Activated T-helper 1 cell treated with anti-CD3 and anti-CD28 coated beads, Interleukin-12 subunit alpha, Interleukin-12 subunit beta, Interleukin-2, Interleukin-4 antibody, amounts not matched to agents 30 ng/mL and 10 ng/mL and 1 ng/mL, durations not matched to agents 14 hours and 24 hours and 36 hours (primary cell): ENCODE measurements at regions of chr3 and their contacts with region 1.

Region 1: GRCh38 chr3:70550723-70551319 is 238.4 kb upstream of the MDFIC2 start:
- DNase-seq: peak; percentile 34
- H3K4me3 Mint-ChIP-seq: no peak overlapping the region
- H3K27ac Mint-ChIP-seq: no peak overlapping the region
- H3K4me1 Mint-ChIP-seq: no peaks in the 10 kb centered on the region
- H3K27me3 Mint-ChIP-seq: peaks cover 17% of the 10 kb centered on the region

Region 2: GRCh38 chr3:71512000-71512399 is 961.2 kb after region 1 on chr3:
- intact Hi-C with region 1: loop called (anchors 10 kb)
- DNase-seq: peak; percentile 3
- H3K4me3 Mint-ChIP-seq: no peak overlapping the region
- H3K27ac Mint-ChIP-seq: no peak overlapping the region
- H3K4me1 Mint-ChIP-seq: peaks cover 8% of the 10 kb centered on the region
- H3K27me3 Mint-ChIP-seq: peaks cover 3% of the 10 kb centered on the region

Region 3: GRCh38 chr3:71652781-71653413 is 1102.1 kb after region 1 on chr3:
- intact Hi-C with region 1: loop called (anchors 1 kb)
- DNase-seq: no peak
- H3K4me3 Mint-ChIP-seq: no peak overlapping the region
- H3K27ac Mint-ChIP-seq: peak overlapping the region; percentile 55
- H3K4me1 Mint-ChIP-seq: no peaks in the 10 kb centered on the region
- H3K27me3 Mint-ChIP-seq: no peaks in the 10 kb centered on the region

Region 4: DNA sequence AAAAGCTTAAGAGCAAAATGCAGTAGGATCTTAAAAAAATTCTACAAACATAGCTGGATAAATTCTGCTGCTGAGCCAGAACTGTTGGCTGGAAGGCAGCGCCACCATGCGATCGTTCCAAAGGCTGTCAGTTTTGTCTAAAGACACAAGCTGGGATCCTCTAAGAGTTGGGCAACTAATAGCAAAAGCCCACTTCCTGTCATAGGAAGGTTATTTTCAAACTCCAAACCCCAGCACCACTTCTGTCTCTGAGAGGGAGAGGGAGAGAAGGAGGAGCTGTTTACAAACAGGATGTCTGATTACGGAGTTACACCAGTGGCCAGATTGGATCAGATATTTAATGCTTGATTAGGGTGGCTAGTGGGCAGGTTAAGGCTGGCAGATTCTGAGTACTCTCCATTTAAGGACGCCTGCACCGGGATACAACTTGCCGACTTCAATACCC is 1130.4 kb after region 1 on chr3:
- intact Hi-C with region 1: loop called (anchors 1 kb)
- DNase-seq: no peak
- H3K4me3 Mint-ChIP-seq: no peak overlapping the region
- H3K27ac Mint-ChIP-seq: no peak overlapping the region
- H3K4me1 Mint-ChIP-seq: peaks cover 12% of the 10 kb centered on the region
- H3K27me3 Mint-ChIP-seq: no peaks in the 10 kb centered on the region